Activated CD8-positive, alpha-beta T cell treated with anti-CD3 and anti-CD28 coated beads for 36 hours (primary cell): ENCODE measurements at regions of chr16 and their contacts with region 1.

Region 1: GRCh38 chr16:56964243-56965148 is 2.7 kb downstream of the CETP start:
- DNase-seq: peak; percentile 100
- ATAC-seq: peak; percentile 92
- H3K4me3 Mint-ChIP-seq: no peak overlapping the region
- H3K27ac Mint-ChIP-seq: peak overlapping the region; percentile 94
- H3K4me1 Mint-ChIP-seq: peaks cover 23% of the 10 kb centered on the region
- H3K27me3 Mint-ChIP-seq: no peaks in the 10 kb centered on the region
- CTCF ChIP-seq: peak; percentile 99

Region 2: DNA sequence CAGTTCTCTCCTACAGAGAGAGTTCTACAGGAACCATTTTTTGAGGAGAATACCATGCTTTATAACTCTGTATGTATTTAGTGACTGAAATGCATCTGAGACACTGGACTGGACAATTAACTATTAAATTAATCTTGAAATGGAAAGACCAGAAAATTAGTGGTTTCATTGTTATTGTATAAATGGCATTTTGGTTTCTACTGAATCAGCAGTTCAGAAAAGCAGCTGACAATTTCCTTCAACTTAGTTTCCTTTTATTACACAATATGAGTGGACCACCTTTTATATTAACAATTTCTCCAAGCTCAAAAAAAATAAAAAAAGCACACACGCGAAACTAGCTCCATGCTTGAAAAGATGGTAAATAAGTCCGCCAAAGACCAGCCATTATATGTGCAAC is 165.5 kb before region 1 on chr16:
- CTCF ChIA-PET with region 1: no interaction called
- POLR2A ChIA-PET with region 1: no interaction called
- intact Hi-C with region 1: no loop called
- DNase-seq: no peak
- ATAC-seq: no peak
- H3K4me3 Mint-ChIP-seq: no peak overlapping the region
- H3K27ac Mint-ChIP-seq: no peak overlapping the region
- H3K4me1 Mint-ChIP-seq: no peaks in the 10 kb centered on the region
- H3K27me3 Mint-ChIP-seq: no peaks in the 10 kb centered on the region
- CTCF ChIP-seq: no peak

Region 3: GRCh38 chr16:56866943-56867830 is 97.3 kb before region 1 on chr16:
- CTCF ChIA-PET with region 1: interaction called, 15 read pairs
- POLR2A ChIA-PET with region 1: no interaction called
- intact Hi-C with region 1: no loop called
- DNase-seq: peak; percentile 66
- ATAC-seq: peak; percentile 55
- H3K4me3 Mint-ChIP-seq: no peak overlapping the region
- H3K27ac Mint-ChIP-seq: no peak overlapping the region
- H3K4me1 Mint-ChIP-seq: peaks cover 11% of the 10 kb centered on the region
- H3K27me3 Mint-ChIP-seq: no peaks in the 10 kb centered on the region
- CTCF ChIP-seq: peak; percentile 90

Region 4: GRCh38 chr16:56980792-56981724 is 16.6 kb after region 1 on chr16:
- CTCF ChIA-PET with region 1: interaction called, 87 read pairs
- POLR2A ChIA-PET with region 1: interaction called, 34 read pairs
- intact Hi-C with region 1: no loop called
- DNase-seq: no peak
- ATAC-seq: peak; percentile 15
- H3K4me3 Mint-ChIP-seq: no peak overlapping the region
- H3K27ac Mint-ChIP-seq: peak overlapping the region; percentile 99
- H3K4me1 Mint-ChIP-seq: peaks cover 78% of the 10 kb centered on the region
- H3K27me3 Mint-ChIP-seq: no peaks in the 10 kb centered on the region
- CTCF ChIP-seq: no peak

Region 5: GRCh38 chr16:57013229-57013628 is 48.7 kb after region 1 on chr16:
- CTCF ChIA-PET with region 1: interaction called, 13 read pairs
- POLR2A ChIA-PET with region 1: interaction called, 4 read pairs
- intact Hi-C with region 1: no loop called
- DNase-seq: no peak
- ATAC-seq: no peak
- H3K4me3 Mint-ChIP-seq: peak overlapping the region; percentile 51
- H3K27ac Mint-ChIP-seq: peak overlapping the region; percentile 97
- H3K4me1 Mint-ChIP-seq: peaks cover 81% of the 10 kb centered on the region
- H3K27me3 Mint-ChIP-seq: no peaks in the 10 kb centered on the region
- CTCF ChIP-seq: no peak

Region 6: DNA sequence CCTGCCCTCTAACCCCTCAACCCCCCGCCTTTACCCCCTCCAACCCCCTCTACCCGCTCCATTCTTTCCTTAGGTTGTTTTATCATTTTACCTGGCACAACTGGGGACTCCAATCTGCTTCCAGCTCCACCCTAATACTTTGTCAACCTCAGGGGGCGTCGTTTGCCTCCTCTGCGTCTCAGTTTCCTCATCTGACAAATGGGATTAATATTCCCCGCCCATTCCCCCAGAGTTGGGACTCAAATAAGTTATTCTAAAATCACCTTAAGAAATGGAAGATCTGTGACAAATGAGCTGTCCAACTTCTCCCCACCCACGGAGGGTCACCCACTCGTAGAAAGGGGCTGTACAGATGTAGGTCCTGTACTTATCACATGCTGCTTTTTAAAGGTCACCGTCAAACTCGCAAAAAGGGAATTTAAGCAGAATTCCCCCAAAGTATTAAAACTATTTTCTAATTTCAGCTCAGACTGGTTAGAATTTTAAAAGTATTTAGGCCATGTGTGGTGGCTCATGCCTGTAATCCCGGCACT is 87.3 kb after region 1 on chr16:
- CTCF ChIA-PET with region 1: interaction called, 27 read pairs
- POLR2A ChIA-PET with region 1: interaction called, 4 read pairs
- intact Hi-C with region 1: no loop called
- DNase-seq: peak; percentile 61
- ATAC-seq: no peak
- H3K4me3 Mint-ChIP-seq: peak overlapping the region; percentile 29
- H3K27ac Mint-ChIP-seq: peak overlapping the region; percentile 91
- H3K4me1 Mint-ChIP-seq: peaks cover 56% of the 10 kb centered on the region
- H3K27me3 Mint-ChIP-seq: no peaks in the 10 kb centered on the region
- CTCF ChIP-seq: no peak

Region 7: DNA sequence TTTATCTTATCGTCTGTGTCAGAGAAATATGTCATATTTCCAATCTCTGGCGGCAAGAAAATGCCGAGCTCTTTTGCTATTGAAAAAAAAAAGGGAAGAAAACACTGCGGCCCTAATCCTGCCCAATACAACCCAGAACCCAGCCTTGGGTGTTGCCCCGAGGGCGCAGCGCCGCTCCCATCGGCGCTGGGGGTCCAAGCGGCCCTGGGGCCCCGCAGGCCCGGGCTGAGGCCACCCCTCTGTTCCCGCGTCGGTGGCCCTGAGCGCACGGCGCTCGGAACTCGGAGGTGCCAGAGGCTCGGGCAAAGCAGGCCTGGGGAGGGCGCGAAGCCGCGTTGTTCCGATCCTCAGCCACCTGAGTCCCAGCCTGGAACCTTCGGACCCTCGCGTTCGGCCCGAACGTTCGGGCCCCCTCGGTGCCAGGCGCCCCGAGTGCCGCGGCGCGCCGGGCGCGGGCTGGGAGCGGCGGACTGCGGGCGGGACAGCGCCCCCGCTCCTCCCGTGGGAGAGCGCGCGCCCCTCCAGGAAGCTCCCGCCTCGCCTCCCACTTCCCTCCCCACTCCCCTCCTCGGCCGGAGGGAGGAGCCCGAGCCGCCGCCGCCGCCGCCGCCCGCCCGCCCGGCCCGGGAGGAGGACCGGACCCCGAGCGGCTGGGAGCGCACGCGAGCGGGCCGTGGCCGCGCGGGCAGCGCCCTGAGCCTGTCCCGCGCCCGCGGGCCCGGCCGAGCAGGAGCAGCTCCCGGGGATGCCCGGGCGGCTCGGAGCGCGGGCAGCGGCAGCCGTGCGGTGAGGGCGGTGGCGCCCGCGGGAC is 127.7 kb after region 1 on chr16 and contains the start of gene CPNE2:
- CTCF ChIA-PET with region 1: interaction called, 12 read pairs
- POLR2A ChIA-PET with region 1: no interaction called
- intact Hi-C with region 1: no loop called
- DNase-seq: peak; percentile 32
- ATAC-seq: peak; percentile 62
- H3K4me3 Mint-ChIP-seq: peak within 1 kb of the TSS; percentile 70
- H3K27ac Mint-ChIP-seq: peak within 1 kb of the TSS; percentile 18
- H3K4me1 Mint-ChIP-seq: peaks cover 12% of the 10 kb centered on the region
- H3K27me3 Mint-ChIP-seq: peaks cover 11% of the 10 kb centered on the region
- CTCF ChIP-seq: no peak
- total RNA-seq, gene CPNE2: 18.6 to 20.6 TPM